ENCODE measurements at regions of chr6 and their contacts with region 1.

Region 1: GRCh38 chr6:151675746-151676416 is 131.6 kb upstream of the ESR1 start:
- DNase-seq: peak; percentile 64
- ATAC-seq: peak; percentile 93
- H3K4me3 ChIP-seq: no peak overlapping the region
- H3K27ac ChIP-seq: no peak overlapping the region
- H3K4me1 ChIP-seq: peaks cover 26% of the 10 kb centered on the region
- H3K27me3 ChIP-seq: no peaks in the 10 kb centered on the region; a peak in 1 of 5 replicates
- CTCF ChIP-seq: peak; percentile 98
- EP300 ChIP-seq: no peak
- POLR2A ChIP-seq: no peak
- RAD21 ChIP-seq: peak; percentile 95

Region 2: DNA sequence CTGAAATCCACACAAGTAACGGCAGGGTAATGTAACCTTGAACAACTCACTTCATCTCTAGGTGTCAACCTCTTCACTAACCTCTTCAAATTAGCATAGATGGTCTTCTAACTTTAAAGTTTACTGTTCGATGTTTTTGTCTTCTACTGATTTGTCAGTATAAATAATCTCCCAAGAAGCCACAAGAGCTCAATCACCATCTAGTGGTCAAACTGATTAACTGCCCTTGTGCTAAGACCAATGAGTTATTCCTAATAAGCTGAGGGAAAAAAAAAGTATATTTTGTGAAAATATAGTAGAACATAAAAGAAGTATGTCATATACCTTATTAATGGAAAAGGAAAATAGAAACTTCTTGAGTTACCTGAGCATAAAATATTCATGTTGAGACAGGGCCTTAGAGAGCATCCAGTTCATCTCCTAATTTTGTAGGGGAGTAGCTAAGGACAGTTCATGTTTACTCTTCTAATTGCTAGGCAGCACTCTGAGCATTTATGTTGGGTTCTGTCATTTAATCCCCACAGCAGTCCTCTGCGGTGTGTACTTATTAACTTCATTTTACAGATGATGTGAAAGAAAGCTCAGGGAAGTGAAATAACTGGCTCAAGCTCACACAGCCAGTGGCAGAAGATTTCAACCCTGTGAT is 448.7 kb after region 1 on chr6:
- CTCF ChIA-PET with region 1: interaction called, 7 read pairs
- POLR2A ChIA-PET with region 1: no interaction called
- in situ Hi-C with region 1: loop called (anchors 5 kb)
- intact Hi-C with region 1: loop called (anchors 1 kb)
- DNase-seq: peak; percentile 54
- ATAC-seq: peak; percentile 84
- H3K4me3 ChIP-seq: no peak overlapping the region
- H3K27ac ChIP-seq: no peak overlapping the region
- H3K4me1 ChIP-seq: no peaks in the 10 kb centered on the region
- H3K27me3 ChIP-seq: no peaks in the 10 kb centered on the region
- CTCF ChIP-seq: peak; percentile 70
- EP300 ChIP-seq: no peak
- POLR2A ChIP-seq: no peak
- RAD21 ChIP-seq: peak; percentile 62

Region 3: DNA sequence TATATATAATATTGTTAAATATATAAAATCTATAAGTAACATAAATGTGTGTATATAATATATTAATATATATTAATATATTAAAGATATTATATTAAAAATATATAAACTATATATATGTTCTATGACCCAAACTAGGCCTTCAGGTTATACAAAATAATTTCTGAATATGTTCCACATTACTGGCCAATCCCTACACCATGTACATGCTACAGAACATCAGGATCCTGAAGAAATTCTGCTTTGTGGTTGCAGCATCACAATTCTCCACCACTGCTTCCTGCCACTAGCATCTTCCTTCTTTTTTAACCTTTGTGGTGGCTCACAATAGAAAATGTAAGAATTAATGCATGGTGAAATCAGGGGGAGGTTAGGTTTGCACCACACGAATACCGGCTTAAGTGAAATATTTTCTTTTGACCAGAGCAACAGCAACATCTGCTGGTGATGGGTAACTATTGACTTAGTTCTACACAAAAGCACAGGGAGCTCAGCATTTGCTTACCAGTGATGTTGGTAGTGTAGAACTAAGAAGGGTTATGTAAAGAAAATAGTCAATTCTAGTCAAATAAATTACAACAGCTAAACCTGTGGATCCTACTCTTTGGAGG is 680.7 kb after region 1 on chr6:
- CTCF ChIA-PET with region 1: no interaction called
- POLR2A ChIA-PET with region 1: no interaction called
- in situ Hi-C with region 1: no loop called
- intact Hi-C with region 1: loop called (anchors 5 kb)
- DNase-seq: peak; percentile 63
- ATAC-seq: peak; percentile 96
- H3K4me3 ChIP-seq: no peak overlapping the region
- H3K27ac ChIP-seq: no peak overlapping the region
- H3K4me1 ChIP-seq: no peaks in the 10 kb centered on the region
- H3K27me3 ChIP-seq: no peaks in the 10 kb centered on the region
- CTCF ChIP-seq: peak; percentile 82
- EP300 ChIP-seq: no peak
- POLR2A ChIP-seq: no peak
- RAD21 ChIP-seq: peak; percentile 76; the same call in 1 of the 2 replicates

Region 4: GRCh38 chr6:152595505-152595904 is 919.6 kb after region 1 on chr6:
- CTCF ChIA-PET with region 1: no interaction called
- POLR2A ChIA-PET with region 1: no interaction called
- in situ Hi-C with region 1: no loop called
- intact Hi-C with region 1: no loop called
- DNase-seq: peak; percentile 16
- ATAC-seq: peak; percentile 94
- H3K4me3 ChIP-seq: no peak overlapping the region
- H3K27ac ChIP-seq: no peak overlapping the region
- H3K4me1 ChIP-seq: no peaks in the 10 kb centered on the region
- H3K27me3 ChIP-seq: no peaks in the 10 kb centered on the region
- CTCF ChIP-seq: 0 out of 2 replicates have a peak, but pooled peaks have one; percentile 13
- EP300 ChIP-seq: no peak
- POLR2A ChIP-seq: no peak
- RAD21 ChIP-seq: no peak

Measured in HepG2 (cell line).